GM10248 (cell line): ENCODE measurements at regions of chr7 and their contacts with region 1.

Region 1: DNA sequence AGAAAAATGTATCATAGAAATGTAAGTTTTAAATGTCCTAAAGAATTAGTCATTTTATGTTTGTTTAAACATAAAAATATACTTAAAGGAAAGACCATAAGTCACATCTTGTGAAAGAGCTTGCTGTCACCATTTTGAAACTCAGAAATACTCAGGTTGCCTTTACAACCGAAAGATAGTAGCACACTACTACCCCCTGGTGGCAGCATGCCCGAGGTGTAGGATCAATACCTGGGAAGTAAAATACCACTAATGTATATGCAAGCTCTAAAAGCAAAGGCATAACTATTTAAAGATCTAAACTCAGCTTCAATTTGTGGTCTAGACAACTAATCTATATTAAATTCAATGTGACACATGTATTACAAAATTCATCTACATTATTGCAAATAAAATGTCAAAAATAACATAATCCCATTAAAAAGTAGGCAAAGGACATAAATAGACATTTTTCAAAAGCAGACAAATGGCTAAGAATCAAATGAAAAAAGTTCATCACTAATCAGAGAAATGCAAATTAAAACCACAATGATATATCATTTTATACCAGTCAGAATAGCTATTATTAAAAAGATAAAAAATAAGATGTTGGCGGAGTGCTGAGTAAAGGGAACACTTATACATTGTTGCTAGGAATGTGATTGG is 47.7 kb upstream of the FGL2 start:
- DNase-seq: peak; percentile 66
- CTCF ChIP-seq: peak; percentile 76

Region 2: DNA sequence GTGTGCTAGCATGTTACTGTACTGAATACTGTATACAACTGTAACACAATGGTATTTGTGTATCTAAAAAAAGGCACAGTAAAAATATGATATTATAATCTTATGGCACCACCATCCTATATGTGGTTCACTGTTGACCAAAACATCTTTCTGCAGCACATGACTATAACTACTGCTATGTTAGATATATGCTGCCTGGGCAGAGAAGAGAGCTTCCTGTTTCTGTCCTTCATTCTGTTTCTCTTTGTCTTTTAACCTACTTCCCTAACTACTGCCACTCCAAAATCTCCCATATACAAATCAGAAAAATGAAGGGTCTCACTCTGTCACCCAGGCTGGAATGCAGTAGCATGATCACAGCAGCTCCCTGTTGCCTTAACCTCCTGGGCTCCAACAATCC is 38.9 kb before region 1 on chr7:
- CTCF ChIA-PET with region 1: interaction called, 10 read pairs
- POLR2A ChIA-PET with region 1: no interaction called
- DNase-seq: no peak
- CTCF ChIP-seq: no peak

Region 3: DNA sequence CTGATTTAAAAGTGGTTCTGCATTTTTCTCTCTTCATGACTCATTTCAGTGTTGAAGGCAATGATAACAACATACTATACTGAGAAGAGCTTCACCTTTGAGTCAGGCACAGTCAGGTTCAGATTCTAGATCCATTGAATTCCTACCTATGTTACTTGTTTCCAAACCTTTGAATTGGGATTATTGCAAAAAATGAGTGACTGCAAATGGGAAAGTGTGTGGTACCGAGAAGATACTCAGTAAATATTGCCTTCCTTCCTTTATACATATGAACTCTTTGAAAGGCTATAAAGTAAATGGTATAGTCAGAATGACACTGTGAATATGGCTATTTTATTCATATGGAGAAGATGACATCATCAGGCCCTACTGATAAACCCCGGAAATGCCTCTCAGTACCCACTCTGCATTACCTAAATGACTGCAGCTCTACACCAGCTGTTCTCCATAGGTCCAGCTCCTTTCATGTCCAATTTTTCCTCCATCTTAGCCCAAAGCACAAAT is 19.0 kb after region 1 on chr7:
- CTCF ChIA-PET with region 1: interaction called, 31 read pairs
- POLR2A ChIA-PET with region 1: no interaction called
- DNase-seq: peak; percentile 60
- CTCF ChIP-seq: no peak

Region 4: DNA sequence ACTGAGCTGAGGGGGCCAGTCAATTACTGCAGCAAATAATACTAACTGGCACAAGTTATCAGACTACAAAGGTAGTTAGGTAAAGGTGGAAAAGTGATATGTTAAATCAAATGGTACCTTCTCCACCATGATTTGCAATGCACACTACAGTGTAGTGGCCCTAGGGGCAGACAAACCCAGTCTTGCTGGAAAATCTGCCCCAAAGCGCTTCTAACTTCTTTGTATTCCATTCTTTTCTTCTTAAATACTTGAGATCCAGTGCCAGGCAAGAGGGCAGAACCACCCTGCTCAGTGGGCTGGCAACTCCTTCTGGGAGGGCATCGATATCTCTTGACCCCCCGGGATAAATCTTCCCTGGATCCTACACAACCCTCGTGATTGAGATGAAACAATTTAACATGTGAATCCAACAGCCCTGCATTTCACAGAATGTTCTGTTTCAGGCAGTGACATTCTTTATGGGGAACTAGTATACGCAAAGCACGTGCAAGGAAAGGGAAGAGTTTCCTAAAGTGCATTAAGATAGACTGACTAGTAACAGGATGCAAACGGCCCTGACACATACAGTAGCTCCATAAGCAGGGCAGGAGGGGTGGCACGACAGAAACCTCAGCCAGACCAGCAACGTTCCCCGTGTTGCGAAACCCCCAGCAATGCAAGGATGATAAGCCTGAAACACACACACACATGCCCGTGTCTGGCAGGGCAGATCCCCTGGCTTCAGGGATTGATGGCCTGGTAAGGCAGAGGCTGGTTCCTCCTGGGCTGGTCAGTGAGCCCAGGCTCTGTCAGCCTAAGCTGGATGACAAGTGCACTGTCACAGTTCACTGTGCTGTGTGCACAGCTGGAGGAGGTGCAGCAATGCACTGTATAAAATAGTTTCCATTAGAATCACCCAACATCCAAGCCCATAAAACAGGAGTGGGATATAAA is 79.6 kb after region 1 on chr7:
- CTCF ChIA-PET with region 1: interaction called, 28 read pairs
- POLR2A ChIA-PET with region 1: no interaction called
- DNase-seq: no peak
- CTCF ChIP-seq: no peak

Region 5: GRCh38 chr7:77348371-77348813 is 101.1 kb after region 1 on chr7:
- CTCF ChIA-PET with region 1: no interaction called
- POLR2A ChIA-PET with region 1: no interaction called
- DNase-seq: no peak
- CTCF ChIP-seq: no peak

Region 6: GRCh38 chr7:77759294-77759889 is 512.1 kb after region 1 on chr7:
- CTCF ChIA-PET with region 1: no interaction called
- POLR2A ChIA-PET with region 1: no interaction called
- DNase-seq: peak; percentile 34
- CTCF ChIP-seq: peak; percentile 78